ENCODE measurements at regions of chr20 and their contacts with region 1.

Region 1: DNA sequence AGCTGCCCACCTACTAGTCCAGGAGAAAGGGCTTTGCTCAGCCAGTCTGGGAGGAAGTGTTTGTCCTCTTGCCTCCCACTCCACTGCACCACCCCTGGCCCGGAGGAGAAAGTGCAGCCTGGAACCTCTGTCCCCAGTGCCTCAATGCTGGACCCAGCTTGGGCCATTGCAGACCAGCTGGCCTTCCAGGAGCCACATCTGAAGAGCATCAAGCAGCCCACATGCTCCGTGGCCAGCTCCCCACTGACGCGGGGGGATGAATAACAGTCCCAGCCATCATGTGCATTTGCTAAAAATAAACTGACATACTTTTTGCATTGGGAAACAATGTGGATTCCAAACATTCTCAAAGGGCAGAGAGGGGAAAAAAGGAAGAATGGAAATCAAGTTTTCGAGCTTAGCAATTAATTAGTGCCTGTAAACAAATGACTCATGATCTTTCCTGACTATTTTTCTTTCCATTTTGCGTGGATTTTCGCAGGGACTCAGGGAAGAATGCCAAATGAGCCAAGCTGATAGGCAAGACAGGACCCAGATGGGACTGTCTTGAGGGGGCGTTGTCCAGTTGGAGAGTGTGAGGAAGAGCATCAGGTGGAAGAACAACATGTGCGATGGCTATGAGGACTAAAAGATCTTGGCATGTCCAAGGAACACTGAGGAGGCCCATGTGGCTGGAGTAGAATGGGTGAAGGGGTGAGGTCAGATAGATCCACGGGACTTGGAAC is 34.1 kb downstream of the CEBPB start:
- DNase-seq: peak; percentile 53 to 89 (median 54)
- H3K4me3 ChIP-seq: no peak overlapping the region
- H3K4me3 Mint-ChIP-seq: no peak overlapping the region
- H3K27ac ChIP-seq: peak overlapping the region; percentile 88 to 97
- H3K27ac Mint-ChIP-seq: peak overlapping the region; percentile 74 to 99 (median 97)
- H3K4me1 ChIP-seq: peaks cover 99 to 100% of the 10 kb centered on the region in 2 donors
- H3K4me1 Mint-ChIP-seq: peaks cover 94% of the 10 kb centered on the region
- H3K27me3 ChIP-seq: no peaks in the 10 kb centered on the region
- H3K27me3 Mint-ChIP-seq: no peaks in the 10 kb centered on the region
- CTCF ChIP-seq: no peak

Region 2: GRCh38 chr20:50260739-50261221 is 36.1 kb after region 1 on chr20:
- intact Hi-C with region 1: loop called in 1 of 2 experiments (anchors 2 kb)
- DNase-seq: peak; percentile 87 to 90 (median 90)
- H3K4me3 ChIP-seq: peak overlapping the region in 1 of 3 experiments; percentile 26
- H3K4me3 Mint-ChIP-seq: peak overlapping the region; percentile 58 to 61
- H3K27ac ChIP-seq: peak overlapping the region; percentile 97 to 99
- H3K27ac Mint-ChIP-seq: peak overlapping the region; percentile 96 to 100 (median 97)
- H3K4me1 ChIP-seq: peaks cover 59 to 76% of the 10 kb centered on the region in 2 donors
- H3K4me1 Mint-ChIP-seq: peaks cover 66% of the 10 kb centered on the region
- H3K27me3 ChIP-seq: no peaks in the 10 kb centered on the region
- H3K27me3 Mint-ChIP-seq: peaks cover 0 to 2% (median 0%) of the 10 kb centered on the region in 3 donors
- CTCF ChIP-seq: no peak

Region 3: DNA sequence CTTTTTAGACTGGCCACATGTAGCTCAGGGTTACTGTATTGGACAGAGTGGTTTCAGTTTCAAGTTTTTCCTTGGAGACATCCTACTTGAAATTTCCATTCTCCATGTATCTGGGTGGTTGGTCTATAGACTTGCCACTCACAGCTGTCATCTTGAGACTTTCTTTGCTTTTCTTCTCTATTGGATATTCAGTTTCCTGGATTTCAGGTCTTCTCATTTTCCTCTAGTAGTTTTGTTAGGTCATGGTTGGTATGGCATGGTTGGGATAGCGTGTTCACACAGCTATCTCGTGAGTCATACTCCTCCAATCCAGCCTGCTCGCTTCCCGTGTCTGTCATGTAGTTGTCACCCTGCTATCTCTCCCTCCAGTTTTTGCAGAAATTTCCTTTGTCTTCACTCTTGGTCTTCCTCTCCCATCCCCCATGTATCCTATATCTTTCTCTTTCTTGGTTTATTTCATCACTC is 333.8 kb after region 1 on chr20:
- intact Hi-C with region 1: no loop called
- DNase-seq: peak in 1 of 3 donors; percentile 21
- H3K4me3 ChIP-seq: no peak overlapping the region
- H3K4me3 Mint-ChIP-seq: no peak overlapping the region
- H3K27ac ChIP-seq: peak overlapping the region in 1 of 2 donors; percentile 18
- H3K27ac Mint-ChIP-seq: peak overlapping the region in 1 of 7 donors; percentile 2
- H3K4me1 ChIP-seq: peaks cover 0 to 5% of the 10 kb centered on the region in 2 donors
- H3K4me1 Mint-ChIP-seq: peaks cover 2% of the 10 kb centered on the region
- H3K27me3 ChIP-seq: no peaks in the 10 kb centered on the region
- H3K27me3 Mint-ChIP-seq: no peaks in the 10 kb centered on the region
- CTCF ChIP-seq: no peak